Left ventricle myocardium superior (tissue), 1 donor: ENCODE measurements at regions of chr11 and their contacts with region 1.

Region 1: GRCh38 chr11:115334932-115335788 is 169.1 kb downstream of the CADM1 start:
- DNase-seq: no peak
- ATAC-seq: no peak

Region 2: DNA sequence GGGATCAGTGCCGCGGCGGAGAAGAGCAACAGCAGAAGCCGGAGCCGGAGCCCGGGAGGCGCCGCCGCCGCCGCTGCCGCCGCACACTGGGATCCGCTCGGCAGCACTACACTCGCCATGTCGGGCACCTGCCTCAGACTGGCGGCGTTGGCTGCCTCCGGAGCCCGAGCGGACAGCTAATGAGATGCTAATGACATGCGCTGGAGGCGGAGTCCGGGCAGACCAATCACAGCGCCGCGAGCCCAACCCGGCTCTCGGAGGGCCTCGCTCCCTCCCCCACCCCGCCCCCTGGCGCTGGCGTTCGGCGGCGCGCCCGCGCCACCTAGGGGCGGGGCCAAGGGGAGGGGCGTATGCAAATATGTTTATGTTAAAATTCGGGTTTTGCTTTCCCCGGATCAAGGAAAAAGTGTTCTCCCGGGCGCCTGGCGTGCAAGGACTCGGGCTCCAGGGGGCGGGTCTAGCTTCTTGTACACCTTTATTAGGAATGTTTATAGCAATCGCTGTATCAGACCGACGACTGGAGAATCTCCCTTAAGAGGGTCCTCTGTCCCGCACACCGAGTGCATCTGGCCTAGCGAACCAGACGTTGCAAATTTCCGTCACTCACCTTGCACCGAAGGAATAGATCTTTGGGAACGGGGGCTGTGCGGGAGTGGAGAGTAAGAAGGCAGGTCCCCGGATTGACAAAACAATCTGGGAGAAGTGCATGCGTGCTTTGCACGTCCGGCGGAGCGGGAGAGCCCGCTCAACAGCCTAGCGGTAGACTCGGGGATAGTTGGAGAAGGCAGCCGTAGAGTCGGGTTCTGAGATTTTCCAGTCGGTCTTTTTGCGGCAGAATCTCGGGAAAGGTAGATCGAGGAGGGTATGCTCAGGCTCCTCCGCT is 169.4 kb after region 1 on chr11 and contains the start of gene CADM1:
- intact Hi-C with region 1: loop called (anchors 5 kb)
- DNase-seq: peak; percentile 95
- ATAC-seq: peak; percentile 93
- total RNA-seq, gene CADM1: 38.5 TPM

Region 3: DNA sequence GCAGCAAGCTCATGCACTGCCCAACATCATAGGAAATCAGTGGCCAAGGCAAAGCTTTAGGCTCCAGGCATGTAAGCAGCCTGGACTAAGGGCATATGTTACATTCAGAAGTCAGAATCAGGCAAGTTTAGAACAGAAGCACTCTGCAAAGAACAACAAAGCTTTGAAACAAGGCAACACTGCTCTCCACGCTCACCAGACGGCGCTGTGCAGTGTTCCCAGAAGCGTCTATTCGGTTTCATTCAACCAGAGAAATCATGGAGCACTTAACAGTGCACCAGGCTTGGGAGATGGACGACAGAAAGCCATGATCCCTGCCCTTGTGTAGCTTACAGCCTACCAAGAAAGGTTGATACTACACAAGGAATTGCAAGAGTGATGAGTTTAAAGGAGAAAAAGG is 881.8 kb after region 1 on chr11:
- intact Hi-C with region 1: loop called (anchors 10 kb)
- DNase-seq: peak; percentile 74
- ATAC-seq: peak; percentile 75